ENCODE measurements at regions of chr9 and their contacts with region 1.

Region 1: DNA sequence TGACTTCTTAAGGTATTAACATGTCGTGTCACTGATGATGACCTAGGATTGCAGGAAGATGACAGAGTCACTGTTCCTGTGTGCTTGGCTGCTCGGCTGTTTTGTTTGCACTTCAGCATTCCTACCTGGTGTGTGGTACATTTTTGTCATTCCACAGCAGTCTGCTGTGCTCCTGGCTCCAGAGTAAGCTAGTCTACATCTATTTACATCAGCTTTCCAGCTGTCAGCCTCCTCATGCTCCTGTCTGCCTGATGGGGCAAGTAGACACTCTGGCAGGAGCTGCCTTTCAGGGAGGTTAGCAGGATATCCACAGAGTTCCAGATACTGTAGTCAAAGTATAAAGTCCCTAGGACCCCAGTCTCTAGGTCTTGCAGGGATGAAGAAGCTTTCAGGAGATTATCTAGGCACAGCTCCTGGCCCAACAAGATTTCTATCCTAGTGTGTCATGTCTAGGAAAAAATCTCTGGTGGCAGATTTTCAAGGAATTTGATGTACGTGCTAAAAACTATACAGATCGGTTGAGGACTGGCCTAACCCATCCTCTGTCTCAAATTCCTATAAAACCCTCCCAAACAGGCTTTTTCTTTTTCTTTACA is 28.4 kb downstream of the RUSC2 start:
- DNase-seq: peak; percentile 59
- ATAC-seq: peak; percentile 95
- H3K4me3 Mint-ChIP-seq: peak overlapping the region; percentile 12; the same call in 1 of the 2 replicates
- H3K27ac Mint-ChIP-seq: peak overlapping the region; percentile 73
- H3K4me1 Mint-ChIP-seq: peaks cover 47% of the 10 kb centered on the region
- H3K27me3 Mint-ChIP-seq: no peaks in the 10 kb centered on the region
- CTCF ChIP-seq: no peak

Region 2: GRCh38 chr9:35489313-35490154 is 28.8 kb before region 1 on chr9 and contains the start of gene RUSC2:
- CTCF ChIA-PET with region 1: interaction called, 11 read pairs
- POLR2A ChIA-PET with region 1: no interaction called
- DNase-seq: peak; percentile 87
- ATAC-seq: peak; percentile 83
- H3K4me3 Mint-ChIP-seq: peak within 1 kb of the TSS; percentile 90
- H3K27ac Mint-ChIP-seq: peak within 1 kb of the TSS; percentile 80
- H3K4me1 Mint-ChIP-seq: peaks cover 32% of the 10 kb centered on the region
- H3K27me3 Mint-ChIP-seq: peaks cover 4% of the 10 kb centered on the region; the same call in 1 of the 2 replicates
- CTCF ChIP-seq: no peak
- total RNA-seq, gene RUSC2: 7.3 to 9.4 TPM (median 8.7 TPM) in 3 replicates

Region 3: DNA sequence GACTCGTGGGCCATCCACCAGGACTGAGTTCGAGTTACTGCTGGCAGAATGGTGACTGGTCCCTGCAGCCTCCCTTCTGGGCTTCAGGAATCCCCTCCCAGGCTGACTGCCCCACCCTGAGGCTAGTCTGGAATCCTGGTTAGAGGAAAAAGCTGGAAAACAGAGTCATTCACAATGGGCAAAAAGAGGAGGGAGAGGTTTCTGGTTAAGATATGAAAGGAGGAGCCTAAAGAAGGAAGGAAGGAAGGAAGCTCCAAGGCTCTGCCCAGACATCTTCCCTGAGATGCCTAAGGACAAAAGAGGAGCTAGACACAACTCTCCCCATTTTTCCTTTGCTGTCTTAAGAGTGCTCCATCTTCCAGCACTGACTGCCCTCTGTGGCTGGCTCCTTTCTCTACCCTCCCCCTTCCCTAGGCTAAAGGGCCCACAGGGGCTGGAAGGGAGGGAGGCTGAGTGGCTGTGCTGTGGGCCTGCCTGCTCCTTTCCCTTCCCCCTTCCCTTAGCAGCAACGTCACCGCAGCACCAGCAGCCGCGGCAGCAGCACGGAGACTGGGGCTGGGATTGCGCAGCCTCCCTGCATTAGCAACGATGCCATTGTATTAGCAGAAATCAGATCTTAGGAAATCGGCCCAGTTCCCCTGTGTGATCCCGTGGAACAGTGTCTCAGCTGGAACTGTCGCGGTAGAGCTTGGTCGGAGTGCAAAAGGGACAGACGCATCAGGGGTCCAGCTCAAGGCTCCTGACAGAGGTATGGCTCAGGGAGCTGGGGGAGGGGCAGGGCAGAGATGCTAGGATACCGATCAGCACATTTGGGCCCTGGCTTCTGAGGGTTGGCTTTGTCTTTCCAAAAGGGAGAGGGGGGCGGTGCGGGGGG is 20.3 kb after region 1 on chr9:
- CTCF ChIA-PET with region 1: interaction called, 10 read pairs
- POLR2A ChIA-PET with region 1: interaction called, 6 read pairs
- DNase-seq: peak; percentile 64
- ATAC-seq: peak; percentile 92
- H3K4me3 Mint-ChIP-seq: peak overlapping the region; percentile 70
- H3K27ac Mint-ChIP-seq: peak overlapping the region; percentile 48
- H3K4me1 Mint-ChIP-seq: peaks cover 26% of the 10 kb centered on the region
- H3K27me3 Mint-ChIP-seq: no peaks in the 10 kb centered on the region
- CTCF ChIP-seq: no peak